Endothelial cell of umbilical vein (primary cell): ENCODE measurements at regions of chr2 and their contacts with region 1.

Region 1: DNA sequence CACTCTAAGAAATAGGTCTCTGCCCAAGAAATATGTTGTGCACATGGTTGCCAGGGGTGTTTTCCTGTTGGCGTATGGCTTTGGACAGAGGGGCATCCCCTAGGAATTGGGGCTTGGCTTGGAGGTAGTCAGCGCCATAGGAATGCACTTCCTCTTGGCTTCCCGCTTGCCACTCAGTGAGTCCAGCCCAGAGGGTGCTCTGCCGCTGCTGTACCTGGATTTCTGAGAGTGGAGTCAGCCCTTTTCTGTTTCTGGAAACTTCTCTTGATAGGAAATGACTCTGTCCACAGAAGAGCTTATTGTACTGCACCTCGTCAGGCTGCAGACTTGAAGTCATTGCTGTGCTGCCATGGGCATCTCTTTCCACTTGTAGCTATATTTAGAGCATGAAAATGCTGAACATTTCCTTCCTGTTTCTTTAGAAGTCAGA is 116.7 kb upstream of the MGAT5 start:
- DNase-seq: peak; percentile 84
- H3K4me3 ChIP-seq: peak overlapping the region in 1 of 3 experiments; percentile 34
- H3K27ac ChIP-seq: peak overlapping the region; percentile 85
- H3K4me1 ChIP-seq: peaks cover 26% of the 10 kb centered on the region
- H3K27me3 ChIP-seq: no peaks in the 10 kb centered on the region
- CTCF ChIP-seq: no peak
- POLR2A ChIP-seq: no peak

Region 2: GRCh38 chr2:134198006-134198634 is 60.9 kb after region 1 on chr2:
- CTCF ChIA-PET with region 1: no interaction called
- POLR2A ChIA-PET with region 1: no interaction called
- dilution Hi-C with region 1: no loop called
- intact Hi-C with region 1: no loop called
- DNase-seq: no peak
- H3K4me3 ChIP-seq: no peak overlapping the region
- H3K27ac ChIP-seq: no peak overlapping the region
- H3K4me1 ChIP-seq: peaks cover 15% of the 10 kb centered on the region
- H3K27me3 ChIP-seq: no peaks in the 10 kb centered on the region
- CTCF ChIP-seq: no peak
- POLR2A ChIP-seq: no peak

Region 3: GRCh38 chr2:134301099-134301927 is 164.1 kb after region 1 on chr2:
- CTCF ChIA-PET with region 1: no interaction called
- POLR2A ChIA-PET with region 1: no interaction called
- dilution Hi-C with region 1: no loop called
- intact Hi-C with region 1: loop called (anchors 5 kb)
- DNase-seq: peak; percentile 81
- H3K4me3 ChIP-seq: peak overlapping the region in 1 of 3 experiments; percentile 16
- H3K27ac ChIP-seq: peak overlapping the region; percentile 78
- H3K4me1 ChIP-seq: peaks cover 47% of the 10 kb centered on the region
- H3K27me3 ChIP-seq: no peaks in the 10 kb centered on the region
- CTCF ChIP-seq: no peak
- POLR2A ChIP-seq: no peak

Region 4: DNA sequence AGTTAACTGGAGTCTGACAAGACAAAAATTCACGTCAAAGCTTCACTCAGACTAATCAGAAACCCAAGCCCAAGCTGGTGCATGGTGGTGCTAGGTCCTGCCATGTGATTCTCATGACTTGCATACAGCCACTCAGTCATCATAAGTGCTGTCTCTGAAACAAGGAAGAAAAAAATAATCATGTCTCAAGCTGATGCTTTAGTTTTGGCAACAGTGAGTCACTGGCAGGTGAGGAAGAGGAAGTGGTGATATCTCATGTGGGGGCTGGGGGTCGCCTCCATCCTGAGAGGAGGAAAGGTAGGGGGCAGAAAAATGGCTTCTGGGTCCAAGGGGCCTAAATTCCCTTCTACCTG is 445.3 kb after region 1 on chr2:
- CTCF ChIA-PET with region 1: no interaction called
- POLR2A ChIA-PET with region 1: no interaction called
- dilution Hi-C with region 1: no loop called
- intact Hi-C with region 1: no loop called
- DNase-seq: no peak
- H3K4me3 ChIP-seq: no peak overlapping the region
- H3K27ac ChIP-seq: no peak overlapping the region
- H3K4me1 ChIP-seq: no peaks in the 10 kb centered on the region
- H3K27me3 ChIP-seq: no peaks in the 10 kb centered on the region
- CTCF ChIP-seq: no peak
- POLR2A ChIP-seq: no peak